ENCODE measurements at regions of chr18 and their contacts with region 1.

Region 1: GRCh38 chr18:24075731-24076130 is 61.2 kb downstream of the TTC39C start:
- DNase-seq: peak in 1 of 2 donors; percentile 15
- ATAC-seq: peak in 1 of 2 donors; percentile 61
- H3K4me3 ChIP-seq: no peak overlapping the region
- H3K27ac ChIP-seq: peak overlapping the region; percentile 61 to 78 (median 68)
- H3K4me1 ChIP-seq: peaks cover 0 to 3% of the 10 kb centered on the region in 2 donors
- H3K27me3 ChIP-seq: no peaks in the 10 kb centered on the region
- CTCF ChIP-seq: no peak
- POLR2A ChIP-seq: no peak

Region 2: GRCh38 chr18:23828426-23828825 is 247.3 kb before region 1 on chr18:
- in situ Hi-C with region 1: no loop called
- intact Hi-C with region 1: loop called (anchors 10 kb)
- DNase-seq: no peak
- ATAC-seq: no peak
- H3K4me3 ChIP-seq: no peak overlapping the region
- H3K27ac ChIP-seq: no peak overlapping the region
- H3K4me1 ChIP-seq: peaks cover 22 to 28% of the 10 kb centered on the region in 2 donors
- H3K27me3 ChIP-seq: no peaks in the 10 kb centered on the region
- CTCF ChIP-seq: no peak
- POLR2A ChIP-seq: no peak

Region 3: GRCh38 chr18:23958036-23958435 is 117.7 kb before region 1 on chr18:
- in situ Hi-C with region 1: no loop called
- intact Hi-C with region 1: loop called (anchors 10 kb)
- DNase-seq: peak; percentile 47 to 63
- ATAC-seq: peak; percentile 83 to 84
- H3K4me3 ChIP-seq: no peak overlapping the region
- H3K27ac ChIP-seq: no peak overlapping the region
- H3K4me1 ChIP-seq: peaks cover 0 to 5% of the 10 kb centered on the region in 2 donors
- H3K27me3 ChIP-seq: no peaks in the 10 kb centered on the region
- CTCF ChIP-seq: no peak
- POLR2A ChIP-seq: no peak

Region 4: GRCh38 chr18:24014062-24014985 is 61.4 kb before region 1 on chr18 and contains the start of gene TTC39C:
- in situ Hi-C with region 1: no loop called
- intact Hi-C with region 1: loop called (anchors 2 kb)
- DNase-seq: peak; percentile 9 to 21
- ATAC-seq: peak; percentile 61
- H3K4me3 ChIP-seq: peak within 1 kb of the TSS; percentile 63 to 95 (median 74)
- H3K27ac ChIP-seq: peak within 1 kb of the TSS; percentile 35 to 55 (median 44)
- H3K4me1 ChIP-seq: peaks cover 10 to 11% of the 10 kb centered on the region in 2 donors
- H3K27me3 ChIP-seq: peaks cover 31 to 50% (median 40%) of the 10 kb centered on the region in 3 donors
- CTCF ChIP-seq: no peak
- POLR2A ChIP-seq: peak in 1 of 2 donors; percentile 16
- total RNA-seq, gene TTC39C: 0.71 to 1.8 (median 1.5) TPM

Region 5: GRCh38 chr18:24118750-24119577 is 43.2 kb after region 1 on chr18:
- in situ Hi-C with region 1: no loop called
- intact Hi-C with region 1: loop called (anchors 5 kb)
- DNase-seq: peak; percentile 17 to 48
- ATAC-seq: peak; percentile 70 to 84
- H3K4me3 ChIP-seq: no peak overlapping the region
- H3K27ac ChIP-seq: no peak overlapping the region
- H3K4me1 ChIP-seq: no peaks in the 10 kb centered on the region
- H3K27me3 ChIP-seq: no peaks in the 10 kb centered on the region
- CTCF ChIP-seq: peak; percentile 75 to 89 (median 86)
- POLR2A ChIP-seq: no peak

Measured in gastrocnemius medialis (tissue), 4 donors.